Dendritic cell treated with granulocyte-macrophage colony-stimulating factor and Interleukin-4, amounts not matched to agents 40 ng/mL and 50 ng/mL, for 4 days (primary cell): ENCODE measurements at regions of chr2 and their contacts with region 1.

Region 1: GRCh38 chr2:24827321-24828237 is 34.4 kb downstream of the CENPO start:
- H3K4me3 Mint-ChIP-seq: no peak overlapping the region
- H3K27ac Mint-ChIP-seq: no peak overlapping the region
- H3K4me1 Mint-ChIP-seq: peaks cover 8% of the 10 kb centered on the region
- H3K27me3 Mint-ChIP-seq: no peaks in the 10 kb centered on the region

Region 2: GRCh38 chr2:24409700-24410556 is 417.7 kb before region 1 on chr2:
- intact Hi-C with region 1: loop called (anchors 1 kb)
- H3K4me3 Mint-ChIP-seq: no peak overlapping the region
- H3K27ac Mint-ChIP-seq: no peak overlapping the region
- H3K4me1 Mint-ChIP-seq: no peaks in the 10 kb centered on the region
- H3K27me3 Mint-ChIP-seq: peaks cover 10% of the 10 kb centered on the region

Region 3: GRCh38 chr2:24613154-24613814 is 214.3 kb before region 1 on chr2:
- intact Hi-C with region 1: loop called (anchors 2 kb)
- H3K4me3 Mint-ChIP-seq: no peak overlapping the region
- H3K27ac Mint-ChIP-seq: no peak overlapping the region
- H3K4me1 Mint-ChIP-seq: no peaks in the 10 kb centered on the region
- H3K27me3 Mint-ChIP-seq: no peaks in the 10 kb centered on the region